WTC11 (cell line): ENCODE measurements at regions of chr20 and their contacts with region 1.

Region 1: DNA sequence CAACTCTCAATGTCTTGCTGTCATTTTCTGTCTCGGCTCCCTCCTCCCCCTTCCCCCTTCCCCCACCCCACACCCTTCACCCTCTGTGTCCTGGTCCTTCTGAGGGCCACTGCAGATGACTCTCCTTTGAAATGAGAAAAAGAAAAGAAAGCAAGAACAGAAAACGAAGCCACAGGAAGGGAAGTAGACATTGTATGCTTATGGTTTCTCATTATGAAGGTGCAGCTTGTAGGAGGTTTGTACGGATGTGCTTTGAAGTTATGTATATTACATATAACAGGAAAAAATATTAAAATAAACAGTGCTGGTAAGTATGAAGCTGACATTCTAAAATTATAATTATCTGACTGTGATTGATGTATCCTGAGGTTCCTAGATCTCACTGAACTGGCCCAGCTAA is 6.3 kb upstream of the AAR2 start:
- DNase-seq: no peak
- ATAC-seq: no peak
- H3K4me3 Mint-ChIP-seq: no peak overlapping the region
- H3K27ac Mint-ChIP-seq: no peak overlapping the region
- H3K4me1 Mint-ChIP-seq: no peaks in the 10 kb centered on the region
- H3K27me3 Mint-ChIP-seq: no peaks in the 10 kb centered on the region
- CTCF ChIP-seq: no peak

Region 2: GRCh38 chr20:36214684-36215256 is 15.2 kb before region 1 on chr20:
- CTCF ChIA-PET with region 1: interaction called, 10 read pairs
- POLR2A ChIA-PET with region 1: no interaction called
- DNase-seq: peak; percentile 43
- ATAC-seq: peak; percentile 77
- H3K4me3 Mint-ChIP-seq: no peak overlapping the region
- H3K27ac Mint-ChIP-seq: no peak overlapping the region
- H3K4me1 Mint-ChIP-seq: no peaks in the 10 kb centered on the region; the same call in 1 of the 2 replicates
- H3K27me3 Mint-ChIP-seq: no peaks in the 10 kb centered on the region
- CTCF ChIP-seq: peak; percentile 45; the same call in 1 of the 2 replicates